Activated CD4-positive, alpha-beta memory T cell treated with anti-CD3 and anti-CD28 coated beads, Interleukin-2, amount 10 ng/mL, durations not matched to agents 7 days and 5 days (primary cell): ENCODE measurements at regions of chr19 and their contacts with region 1.

Region 1: GRCh38 chr19:34712395-34713261 is 21.4 kb upstream of the ZNF181 start:
- DNase-seq: peak; percentile 57
- H3K4me3 Mint-ChIP-seq: no peak overlapping the region
- H3K27ac Mint-ChIP-seq: no peak overlapping the region
- H3K4me1 Mint-ChIP-seq: no peaks in the 10 kb centered on the region
- H3K27me3 Mint-ChIP-seq: peaks cover 8% of the 10 kb centered on the region

Region 2: DNA sequence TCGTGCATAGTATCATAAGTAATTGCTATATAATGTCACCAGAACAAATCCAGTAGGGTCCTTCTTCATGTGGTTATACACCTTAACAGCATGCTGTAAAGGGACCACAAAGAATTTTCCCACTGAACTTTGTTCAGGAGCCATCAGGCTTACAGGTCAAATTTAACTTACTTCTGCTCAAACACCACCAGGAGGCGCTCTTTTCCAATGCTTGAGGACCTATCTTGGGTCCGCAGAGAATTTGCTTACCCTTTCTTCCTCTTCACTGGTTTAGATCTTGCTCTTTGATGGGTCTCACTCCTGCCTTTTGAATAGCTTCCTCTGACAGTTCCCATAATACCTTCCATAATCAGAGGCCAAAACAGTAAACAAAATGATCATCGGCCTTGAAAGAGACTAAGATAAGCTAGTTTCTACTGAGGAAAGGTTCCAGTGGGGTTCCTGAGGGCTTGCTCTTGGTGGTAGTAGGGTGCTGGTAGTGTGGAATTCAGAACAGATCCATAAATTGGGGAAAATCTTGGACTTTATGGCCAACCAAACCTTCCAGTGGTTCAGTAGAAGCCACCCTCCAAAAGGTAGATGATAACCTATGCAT is 73.0 kb before region 1 on chr19:
- CTCF ChIA-PET with region 1: interaction called, 62 read pairs
- POLR2A ChIA-PET with region 1: no interaction called
- DNase-seq: peak; percentile 52
- H3K4me3 Mint-ChIP-seq: no peak overlapping the region
- H3K27ac Mint-ChIP-seq: no peak overlapping the region
- H3K4me1 Mint-ChIP-seq: no peaks in the 10 kb centered on the region
- H3K27me3 Mint-ChIP-seq: no peaks in the 10 kb centered on the region

Region 3: GRCh38 chr19:34772697-34773554 is 60.3 kb after region 1 on chr19 and contains the start of gene ZNF599:
- CTCF ChIA-PET with region 1: no interaction called
- POLR2A ChIA-PET with region 1: no interaction called
- DNase-seq: peak; percentile 91
- H3K4me3 Mint-ChIP-seq: peak within 1 kb of the TSS; percentile 86
- H3K27ac Mint-ChIP-seq: peak within 1 kb of the TSS; percentile 75
- H3K4me1 Mint-ChIP-seq: peaks cover 16% of the 10 kb centered on the region
- H3K27me3 Mint-ChIP-seq: no peaks in the 10 kb centered on the region
- total RNA-seq, gene ZNF599: 4.1 to 4.9 TPM